SK-N-SH (cell line): ENCODE measurements at regions of chrX and their contacts with region 1.

Region 1: GRCh38 chrX:130916636-130917422 is 13.8 kb upstream of the ENOX2 start:
- DNase-seq: peak; percentile 62
- H3K4me3 ChIP-seq: no peak overlapping the region; a peak in 1 of 4 replicates
- H3K27ac ChIP-seq: no peak overlapping the region
- H3K4me1 ChIP-seq: no peaks in the 10 kb centered on the region
- H3K27me3 ChIP-seq: peaks cover 13% of the 10 kb centered on the region; the same call in 1 of the 2 replicates
- CTCF ChIP-seq: peak; percentile 87
- EP300 ChIP-seq: no peak
- RAD21 ChIP-seq: peak; percentile 92

Region 2: DNA sequence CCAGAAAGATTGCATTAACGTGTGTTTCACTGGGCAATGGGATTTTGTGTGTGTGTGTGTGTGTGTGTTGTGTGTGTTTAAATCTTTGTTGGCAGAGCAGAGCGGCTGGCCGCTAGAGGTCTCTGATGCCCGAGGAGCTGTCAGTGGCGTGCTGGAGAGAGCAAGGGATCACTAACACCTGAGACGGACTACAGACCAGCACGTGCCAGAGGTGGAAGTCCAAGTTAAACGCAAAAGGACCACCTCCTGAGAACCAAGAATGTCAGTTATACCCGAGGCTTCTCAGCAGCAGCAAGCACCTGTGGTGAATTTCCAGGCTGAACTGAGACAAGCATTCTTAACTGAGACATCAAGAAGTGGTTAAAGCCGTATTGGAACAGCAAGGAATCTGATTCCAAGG is 586.1 kb before region 1 on chrX:
- CTCF ChIA-PET with region 1: interaction called, 11 read pairs
- POLR2A ChIA-PET with region 1: no interaction called
- DNase-seq: peak; percentile 63
- H3K4me3 ChIP-seq: no peak overlapping the region
- H3K27ac ChIP-seq: no peak overlapping the region
- H3K4me1 ChIP-seq: no peaks in the 10 kb centered on the region; a peak in 1 of 4 replicates
- H3K27me3 ChIP-seq: peaks cover 10% of the 10 kb centered on the region; the same call in 1 of the 2 replicates
- CTCF ChIP-seq: peak; percentile 68
- EP300 ChIP-seq: no peak
- RAD21 ChIP-seq: peak; percentile 72

Region 3: GRCh38 chrX:130385520-130385919 is 531.3 kb before region 1 on chrX and contains the start of gene GPR119:
- CTCF ChIA-PET with region 1: interaction called, 10 read pairs
- POLR2A ChIA-PET with region 1: no interaction called
- DNase-seq: no peak
- H3K4me3 ChIP-seq: no peak within 1 kb of the TSS
- H3K27ac ChIP-seq: no peak within 1 kb of the TSS
- H3K4me1 ChIP-seq: no peaks in the 10 kb centered on the region
- H3K27me3 ChIP-seq: peaks cover 6% of the 10 kb centered on the region; the same call in 1 of the 2 replicates
- CTCF ChIP-seq: no peak
- EP300 ChIP-seq: no peak
- RAD21 ChIP-seq: no peak
- polyA plus RNA-seq, gene GPR119: not detected in 2 replicates

Region 4: DNA sequence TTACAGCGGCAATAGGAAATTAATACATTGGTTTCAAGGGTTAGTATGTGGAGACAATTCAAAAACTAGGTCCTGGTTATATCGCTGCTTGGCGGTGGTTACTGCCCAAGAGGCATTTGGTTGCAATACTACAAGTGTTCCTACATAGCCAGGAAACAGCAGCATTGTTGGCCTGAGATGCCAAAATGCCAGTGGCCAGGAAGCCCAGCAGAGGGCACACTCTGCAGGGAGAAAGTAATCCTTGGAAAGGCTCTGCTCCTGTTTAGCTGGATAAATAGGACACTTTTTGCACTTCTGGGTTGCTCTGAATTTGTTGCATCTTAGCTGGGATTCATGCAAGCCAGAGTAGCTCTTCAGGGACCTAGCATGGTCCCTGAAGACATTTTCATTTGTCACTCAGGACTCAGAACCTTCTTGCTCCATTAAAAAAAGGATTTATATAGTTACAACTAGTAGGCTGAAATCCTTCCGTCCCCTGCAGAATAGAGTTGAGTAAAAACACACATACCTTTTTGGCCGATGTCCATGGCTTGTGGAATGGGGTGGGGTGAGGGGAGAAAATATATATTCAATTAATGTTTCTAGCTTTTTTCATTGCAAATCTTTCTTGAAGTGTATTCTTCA is 523.3 kb before region 1 on chrX:
- CTCF ChIA-PET with region 1: interaction called, 82 read pairs
- POLR2A ChIA-PET with region 1: no interaction called
- DNase-seq: peak; percentile 64
- H3K4me3 ChIP-seq: no peak overlapping the region; a peak in 1 of 4 replicates
- H3K27ac ChIP-seq: no peak overlapping the region
- H3K4me1 ChIP-seq: no peaks in the 10 kb centered on the region
- H3K27me3 ChIP-seq: peaks cover 8% of the 10 kb centered on the region; the same call in 1 of the 2 replicates
- CTCF ChIP-seq: peak; percentile 83
- EP300 ChIP-seq: no peak
- RAD21 ChIP-seq: peak; percentile 81

Region 5: DNA sequence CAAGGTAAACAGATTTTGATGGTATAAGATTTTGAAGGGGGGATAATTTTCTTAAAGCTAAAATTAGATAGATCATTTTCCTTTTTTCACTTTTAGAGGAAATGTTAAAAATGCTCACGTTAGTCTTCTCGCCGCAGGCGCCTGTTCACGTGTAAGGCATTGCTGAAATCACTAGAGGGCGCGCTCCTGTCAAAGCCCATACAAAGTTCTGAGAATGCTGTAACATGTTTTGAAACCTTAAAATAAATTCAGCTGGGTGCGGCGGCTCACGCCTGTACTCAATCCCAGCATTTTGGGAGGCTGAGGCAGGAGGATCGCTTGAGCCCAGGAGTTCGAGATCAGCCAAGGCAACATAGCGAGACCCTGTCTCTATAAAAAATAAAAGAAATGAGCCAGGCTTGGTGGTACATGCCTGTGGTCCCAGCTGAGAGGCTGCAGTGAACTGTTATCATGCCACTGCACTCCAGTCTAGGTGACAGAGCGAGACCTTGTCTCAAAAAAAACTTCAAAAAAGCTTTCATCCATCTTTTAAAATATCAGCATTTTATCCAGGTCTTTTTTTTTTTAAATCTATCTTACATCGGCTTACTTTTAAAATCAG is 377.0 kb before region 1 on chrX:
- CTCF ChIA-PET with region 1: interaction called, 60 read pairs
- POLR2A ChIA-PET with region 1: no interaction called
- DNase-seq: peak; percentile 47
- H3K4me3 ChIP-seq: peak overlapping the region in 1 of 2 experiments; percentile 19; a peak in 1 of 4 replicates
- H3K27ac ChIP-seq: no peak overlapping the region
- H3K4me1 ChIP-seq: no peaks in the 10 kb centered on the region
- H3K27me3 ChIP-seq: peaks cover 20% of the 10 kb centered on the region; the same call in 1 of the 2 replicates
- CTCF ChIP-seq: peak; percentile 94
- EP300 ChIP-seq: no peak
- RAD21 ChIP-seq: peak; percentile 74

Region 6: DNA sequence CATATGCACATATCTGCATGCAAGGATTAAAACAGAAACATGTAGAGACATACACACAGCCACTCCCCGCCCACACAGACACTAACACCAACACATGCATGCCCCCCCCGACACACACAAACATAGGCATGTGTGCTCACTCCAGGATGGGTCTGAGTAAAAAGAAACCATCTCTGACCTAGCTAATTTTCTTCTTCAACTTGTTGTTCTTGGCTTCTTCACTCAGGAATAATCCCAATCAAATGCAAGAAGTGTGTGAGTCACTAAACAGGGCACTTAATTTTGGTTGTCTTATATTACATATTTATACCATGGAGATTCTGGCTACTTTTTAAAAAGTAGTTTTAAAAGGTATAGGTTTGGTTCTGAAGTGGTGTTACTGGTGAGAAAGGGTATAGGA is 42.1 kb before region 1 on chrX:
- CTCF ChIA-PET with region 1: no interaction called
- POLR2A ChIA-PET with region 1: no interaction called
- DNase-seq: no peak
- H3K4me3 ChIP-seq: no peak overlapping the region
- H3K27ac ChIP-seq: no peak overlapping the region
- H3K4me1 ChIP-seq: no peaks in the 10 kb centered on the region; a peak in 2 of 4 replicates
- H3K27me3 ChIP-seq: no peaks in the 10 kb centered on the region
- CTCF ChIP-seq: no peak
- EP300 ChIP-seq: no peak
- RAD21 ChIP-seq: no peak

Region 7: DNA sequence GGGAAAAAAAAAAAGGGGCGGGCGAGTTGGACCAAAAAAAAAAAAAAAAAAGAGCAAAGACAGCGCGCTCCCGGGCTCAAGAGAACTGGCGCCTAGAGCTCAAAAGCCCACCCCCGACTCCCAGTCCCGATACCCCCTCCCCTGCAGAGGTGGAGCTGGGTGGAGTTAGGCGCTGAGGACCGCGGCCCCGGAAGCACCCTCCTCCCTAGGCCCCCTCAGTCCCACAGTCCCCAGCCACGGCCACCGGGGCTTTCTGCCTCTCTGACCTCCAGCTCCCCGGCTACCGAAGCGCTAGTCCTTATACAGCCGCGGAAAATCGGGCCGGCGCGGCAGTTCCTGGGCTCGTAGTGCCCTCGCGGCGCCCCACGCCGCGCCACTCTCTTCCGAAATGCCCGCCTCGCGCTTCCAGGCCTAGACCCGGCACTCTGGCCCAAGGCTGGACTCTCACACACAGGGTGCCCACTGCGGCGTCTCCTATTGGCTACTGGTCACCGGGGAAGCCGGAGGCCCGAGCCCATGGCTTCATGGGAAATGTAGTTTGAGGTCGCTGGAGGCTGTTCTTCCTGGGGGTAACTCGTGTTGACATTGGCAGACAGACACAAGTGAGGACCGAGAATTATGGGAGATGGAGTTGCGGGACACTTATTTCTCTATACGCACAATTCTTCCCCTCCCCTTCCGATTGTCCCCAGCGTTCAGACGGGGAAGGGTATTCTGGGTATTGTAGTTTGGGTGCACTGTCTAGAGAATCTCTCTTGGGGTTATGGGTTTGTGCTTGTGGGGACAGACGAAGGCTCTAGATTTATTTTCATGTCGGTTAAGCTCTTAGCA is 13.8 kb before region 1 on chrX and contains the start of gene ENOX2:
- CTCF ChIA-PET with region 1: interaction called, 61 read pairs
- POLR2A ChIA-PET with region 1: no interaction called
- DNase-seq: peak; percentile 81
- H3K4me3 ChIP-seq: peak within 1 kb of the TSS; percentile 71 to 72
- H3K27ac ChIP-seq: peak within 1 kb of the TSS; percentile 77 to 91
- H3K4me1 ChIP-seq: no peaks in the 10 kb centered on the region; a peak in 1 of 4 replicates
- H3K27me3 ChIP-seq: no peaks in the 10 kb centered on the region
- CTCF ChIP-seq: no peak
- EP300 ChIP-seq: peak in 1 of 2 experiments; percentile 20; a peak in 1 of 4 replicates
- RAD21 ChIP-seq: no peak
- polyA plus RNA-seq, gene ENOX2: 8.8 and 12.8 TPM in 2 replicates

Region 8: GRCh38 chrX:130933358-130933757 is 16.5 kb after region 1 on chrX:
- CTCF ChIA-PET with region 1: interaction called, 16 read pairs
- POLR2A ChIA-PET with region 1: no interaction called
- DNase-seq: no peak
- H3K4me3 ChIP-seq: no peak overlapping the region
- H3K27ac ChIP-seq: no peak overlapping the region
- H3K4me1 ChIP-seq: no peaks in the 10 kb centered on the region
- H3K27me3 ChIP-seq: no peaks in the 10 kb centered on the region
- CTCF ChIP-seq: no peak
- EP300 ChIP-seq: no peak
- RAD21 ChIP-seq: no peak